ENCODE measurements at regions of chr6 and their contacts with region 1.

Region 1: GRCh38 chr6:131199568-131200272 is 64.5 kb downstream of the AKAP7 start:
- DNase-seq: peak; percentile 95
- H3K4me3 ChIP-seq: peak overlapping the region; percentile 51
- H3K27ac ChIP-seq: peak overlapping the region; percentile 66
- H3K4me1 ChIP-seq: peaks cover 40% of the 10 kb centered on the region
- CTCF ChIP-seq: peak; percentile 95

Region 2: GRCh38 chr6:130885392-130886192 is 314.1 kb before region 1 on chr6:
- CTCF ChIA-PET with region 1: no interaction called
- POLR2A ChIA-PET with region 1: no interaction called
- intact Hi-C with region 1: loop called (anchors 10 kb)
- DNase-seq: peak; percentile 81
- H3K4me3 ChIP-seq: no peak overlapping the region
- H3K27ac ChIP-seq: no peak overlapping the region
- H3K4me1 ChIP-seq: no peaks in the 10 kb centered on the region
- CTCF ChIP-seq: peak; percentile 98

Region 3: DNA sequence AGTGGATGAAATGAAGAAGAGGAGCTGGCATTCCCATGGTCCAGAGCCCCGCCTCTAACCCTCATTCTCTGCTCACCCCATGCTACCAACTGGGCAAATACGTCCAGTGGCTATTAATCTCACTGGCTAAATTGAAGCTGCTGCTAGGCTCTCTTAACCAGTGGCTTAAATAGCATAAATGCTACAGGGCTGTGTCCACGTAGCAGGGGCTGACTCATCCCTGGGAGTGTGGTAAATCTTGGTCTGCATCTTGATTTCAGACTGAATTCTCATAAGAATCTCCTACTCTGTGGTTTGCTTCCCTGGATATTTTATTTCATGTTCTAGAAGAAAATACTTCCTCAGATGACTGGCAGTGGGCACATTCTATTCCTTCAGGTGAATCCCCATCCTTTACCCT is 180.2 kb after region 1 on chr6:
- CTCF ChIA-PET with region 1: no interaction called
- POLR2A ChIA-PET with region 1: interaction called, 3 read pairs
- intact Hi-C with region 1: loop called (anchors 1 kb)
- DNase-seq: no peak
- H3K4me3 ChIP-seq: no peak overlapping the region
- H3K27ac ChIP-seq: no peak overlapping the region
- H3K4me1 ChIP-seq: peaks cover 55% of the 10 kb centered on the region
- CTCF ChIP-seq: no peak

Region 4: GRCh38 chr6:131519670-131520436 is 320.1 kb after region 1 on chr6:
- CTCF ChIA-PET with region 1: no interaction called
- POLR2A ChIA-PET with region 1: no interaction called
- intact Hi-C with region 1: loop called (anchors 5 kb)
- DNase-seq: peak; percentile 69
- H3K4me3 ChIP-seq: no peak overlapping the region
- H3K27ac ChIP-seq: no peak overlapping the region
- H3K4me1 ChIP-seq: no peaks in the 10 kb centered on the region
- CTCF ChIP-seq: peak; percentile 77

Region 5: DNA sequence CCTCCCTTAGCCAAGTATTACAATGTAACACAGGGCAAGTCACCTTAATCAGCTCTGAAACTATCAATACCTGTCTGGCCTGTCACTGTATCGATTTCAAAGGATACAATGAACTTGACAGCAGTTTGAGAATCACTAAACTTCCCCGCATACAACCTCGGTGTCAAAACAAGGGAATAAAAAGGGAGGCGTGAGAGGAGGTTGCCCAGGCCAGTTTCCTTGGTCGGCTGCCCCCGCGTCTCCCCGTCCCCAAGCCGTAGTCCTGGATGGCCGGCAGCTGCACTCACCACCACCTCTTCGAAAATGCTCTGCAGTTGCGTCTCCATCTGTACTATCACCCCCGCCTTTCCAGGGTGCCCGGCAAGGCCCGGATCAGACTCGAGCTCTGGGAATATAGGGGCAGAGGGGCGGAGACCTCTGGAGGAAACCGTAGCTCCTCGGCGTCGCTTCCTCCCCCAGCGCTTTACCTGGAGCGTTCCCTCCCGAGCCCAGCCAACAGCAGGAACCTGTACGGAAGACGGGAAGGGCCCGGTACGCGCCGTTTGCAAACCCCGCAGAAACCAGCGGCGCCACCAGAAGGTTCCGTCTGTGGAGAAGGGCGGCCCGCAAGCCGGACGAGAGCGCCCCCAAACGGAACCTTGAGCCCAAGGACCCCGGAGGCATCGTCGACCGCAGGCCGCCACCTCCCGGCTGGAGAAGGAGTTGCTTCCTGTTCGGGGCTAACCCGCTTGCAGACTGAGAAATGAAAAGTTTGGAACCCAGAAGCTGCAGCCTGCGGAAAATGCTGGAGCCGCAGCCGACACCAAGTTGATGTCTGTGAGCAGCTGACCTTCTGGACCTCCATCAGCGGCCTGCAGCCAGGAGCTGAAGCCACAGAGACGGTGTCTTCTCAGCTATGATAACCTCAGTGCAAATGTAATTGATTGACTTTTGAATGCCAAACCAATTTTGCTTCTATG is 428.3 kb after region 1 on chr6 and contains the start of gene MED23:
- CTCF ChIA-PET with region 1: interaction called, 5 read pairs
- POLR2A ChIA-PET with region 1: no interaction called
- intact Hi-C with region 1: loop called (anchors 1 kb)
- DNase-seq: peak; percentile 95
- H3K4me3 ChIP-seq: peak within 1 kb of the TSS; percentile 87
- H3K27ac ChIP-seq: peak within 1 kb of the TSS; percentile 37
- H3K4me1 ChIP-seq: peaks cover 15% of the 10 kb centered on the region
- CTCF ChIP-seq: peak; percentile 98
- total RNA-seq, gene MED23: 28.2 and 30.2 TPM in 2 replicates